Endothelial cell of umbilical vein (primary cell): ENCODE measurements at regions of chr7 and their contacts with region 1.

Region 1: GRCh38 chr7:134690016-134690415 is 43.4 kb downstream of the BPGM start:
- DNase-seq: peak; percentile 56
- H3K4me3 ChIP-seq: no peak overlapping the region
- H3K27ac ChIP-seq: no peak overlapping the region
- H3K4me1 ChIP-seq: no peaks in the 10 kb centered on the region
- H3K27me3 ChIP-seq: peaks cover 0 to 3% of the 10 kb centered on the region in 2 experiments
- CTCF ChIP-seq: peak in 1 of 2 donors; percentile 39
- POLR2A ChIP-seq: no peak

Region 2: GRCh38 chr7:134755401-134756022 is 65.5 kb after region 1 on chr7:
- CTCF ChIA-PET with region 1: interaction called, 15 read pairs
- POLR2A ChIA-PET with region 1: no interaction called
- dilution Hi-C with region 1: no loop called
- intact Hi-C with region 1: no loop called
- DNase-seq: peak; percentile 54
- H3K4me3 ChIP-seq: no peak overlapping the region
- H3K27ac ChIP-seq: no peak overlapping the region
- H3K4me1 ChIP-seq: no peaks in the 10 kb centered on the region
- H3K27me3 ChIP-seq: no peaks in the 10 kb centered on the region
- CTCF ChIP-seq: peak; percentile 48 to 60
- POLR2A ChIP-seq: no peak

Region 3: GRCh38 chr7:134811765-134812164 is 121.7 kb after region 1 on chr7:
- CTCF ChIA-PET with region 1: no interaction called
- POLR2A ChIA-PET with region 1: no interaction called
- dilution Hi-C with region 1: no loop called
- intact Hi-C with region 1: no loop called
- DNase-seq: peak; percentile 62
- H3K4me3 ChIP-seq: no peak overlapping the region
- H3K27ac ChIP-seq: peak overlapping the region; percentile 34
- H3K4me1 ChIP-seq: peaks cover 46% of the 10 kb centered on the region
- H3K27me3 ChIP-seq: no peaks in the 10 kb centered on the region
- CTCF ChIP-seq: no peak
- POLR2A ChIP-seq: no peak

Region 4: GRCh38 chr7:134954197-134955082 is 264.4 kb after region 1 on chr7:
- CTCF ChIA-PET with region 1: interaction called, 8 read pairs
- POLR2A ChIA-PET with region 1: no interaction called
- dilution Hi-C with region 1: no loop called
- intact Hi-C with region 1: loop called (anchors 1 kb)
- DNase-seq: peak; percentile 38
- H3K4me3 ChIP-seq: no peak overlapping the region
- H3K27ac ChIP-seq: no peak overlapping the region
- H3K4me1 ChIP-seq: no peaks in the 10 kb centered on the region
- H3K27me3 ChIP-seq: no peaks in the 10 kb centered on the region
- CTCF ChIP-seq: peak; percentile 20 to 37
- POLR2A ChIP-seq: no peak